PC-3 (cell line): ENCODE measurements at regions of chr12 and their contacts with region 1.

Region 1: GRCh38 chr12:66279123-66279712 is 23.1 kb upstream of the HELB start:
- DNase-seq: peak; percentile 41
- ATAC-seq: no peak
- H3K4me3 ChIP-seq: no peak overlapping the region
- H3K27ac ChIP-seq: no peak overlapping the region
- H3K4me1 ChIP-seq: no peaks in the 10 kb centered on the region
- H3K27me3 ChIP-seq: peaks cover 23% of the 10 kb centered on the region
- CTCF ChIP-seq: peak; percentile 80

Region 2: GRCh38 chr12:66301944-66302826 is 23.0 kb after region 1 on chr12 and contains the start of gene HELB:
- CTCF ChIA-PET with region 1: interaction called, 10 read pairs
- POLR2A ChIA-PET with region 1: no interaction called
- intact Hi-C with region 1: no loop called
- DNase-seq: peak; percentile 98
- ATAC-seq: peak; percentile 92
- H3K4me3 ChIP-seq: peak within 1 kb of the TSS; percentile 98
- H3K27ac ChIP-seq: peak within 1 kb of the TSS; percentile 57
- H3K4me1 ChIP-seq: peaks cover 17% of the 10 kb centered on the region
- H3K27me3 ChIP-seq: no peaks in the 10 kb centered on the region
- CTCF ChIP-seq: no peak
- total RNA-seq, gene HELB: 2.1 and 2.7 TPM in 2 replicates

Region 3: DNA sequence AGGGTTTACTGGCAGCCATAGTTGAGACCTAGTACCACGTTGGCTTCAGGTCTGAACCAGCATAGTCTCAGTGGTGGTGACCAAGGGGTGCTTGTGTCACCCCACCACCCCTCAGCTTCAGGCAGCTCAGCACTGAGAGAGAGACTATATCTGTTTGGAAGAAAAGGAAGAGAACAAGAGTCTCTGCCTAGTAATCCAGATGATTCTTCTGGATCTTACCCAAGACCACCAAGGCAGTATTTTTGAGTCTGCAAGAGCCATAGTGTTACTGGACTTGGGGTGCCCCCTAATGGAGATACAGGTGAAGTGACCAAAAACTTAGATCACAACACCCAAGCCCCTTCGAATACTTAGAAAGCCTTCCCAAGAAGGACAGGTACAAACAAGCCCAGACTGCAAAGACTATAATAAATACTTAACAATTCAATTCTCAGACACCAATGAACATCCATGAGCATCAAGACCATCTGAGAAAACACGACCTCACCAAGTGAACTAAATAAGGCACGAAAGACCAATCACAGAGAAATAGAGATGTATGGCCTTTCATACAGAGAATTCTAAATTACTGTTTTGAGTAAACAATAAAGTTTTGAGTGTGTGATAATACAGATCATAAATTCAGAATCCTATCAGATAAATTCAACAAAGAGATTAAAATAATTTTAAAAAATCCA is 130.1 kb after region 1 on chr12:
- CTCF ChIA-PET with region 1: no interaction called
- POLR2A ChIA-PET with region 1: no interaction called
- intact Hi-C with region 1: loop called (anchors 1 kb)
- DNase-seq: peak; percentile 59
- ATAC-seq: peak; percentile 51; the same call in 1 of the 2 replicates
- H3K4me3 ChIP-seq: no peak overlapping the region
- H3K27ac ChIP-seq: no peak overlapping the region
- H3K4me1 ChIP-seq: peaks cover 10% of the 10 kb centered on the region
- H3K27me3 ChIP-seq: no peaks in the 10 kb centered on the region
- CTCF ChIP-seq: peak; percentile 81

Region 4: GRCh38 chr12:67077617-67078016 is 798.4 kb after region 1 on chr12:
- CTCF ChIA-PET with region 1: no interaction called
- POLR2A ChIA-PET with region 1: no interaction called
- intact Hi-C with region 1: no loop called
- DNase-seq: peak; percentile 88
- ATAC-seq: peak; percentile 81
- H3K4me3 ChIP-seq: no peak overlapping the region
- H3K27ac ChIP-seq: peak overlapping the region; percentile 10; the same call in 1 of the 2 replicates
- H3K4me1 ChIP-seq: peaks cover 16% of the 10 kb centered on the region
- H3K27me3 ChIP-seq: peaks cover 12% of the 10 kb centered on the region; the same call in 1 of the 2 replicates
- CTCF ChIP-seq: no peak